HCT116 (cell line): ENCODE measurements at regions of chr12 and their contacts with region 1.

Region 1: DNA sequence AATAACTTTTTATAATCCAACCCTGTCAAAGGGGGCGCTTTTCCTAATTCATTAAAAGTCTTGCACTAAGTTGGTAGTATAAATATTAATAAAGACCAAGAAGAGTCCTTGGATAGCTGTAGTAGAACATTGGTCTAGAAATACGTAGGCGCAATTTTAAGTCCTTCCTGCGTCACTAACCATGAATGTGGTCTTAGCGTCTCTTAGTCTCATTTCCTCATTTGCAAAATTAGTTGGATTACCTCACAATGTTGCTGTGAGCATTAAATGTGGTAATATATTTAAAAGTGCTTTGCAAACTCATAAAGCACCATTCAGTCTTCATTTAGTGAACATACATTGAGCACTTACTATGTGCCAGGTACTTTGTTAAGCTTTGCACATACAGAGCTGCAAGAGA is 149.7 kb downstream of the AEBP2 start:
- DNase-seq: no peak
- ATAC-seq: no peak
- H3K4me3 ChIP-seq: no peak overlapping the region
- H3K27ac ChIP-seq: no peak overlapping the region
- H3K4me1 ChIP-seq: no peaks in the 10 kb centered on the region
- H3K27me3 ChIP-seq: no peaks in the 10 kb centered on the region
- CTCF ChIP-seq: no peak
- POLR2A ChIP-seq: no peak
- RAD21 ChIP-seq: no peak

Region 2: DNA sequence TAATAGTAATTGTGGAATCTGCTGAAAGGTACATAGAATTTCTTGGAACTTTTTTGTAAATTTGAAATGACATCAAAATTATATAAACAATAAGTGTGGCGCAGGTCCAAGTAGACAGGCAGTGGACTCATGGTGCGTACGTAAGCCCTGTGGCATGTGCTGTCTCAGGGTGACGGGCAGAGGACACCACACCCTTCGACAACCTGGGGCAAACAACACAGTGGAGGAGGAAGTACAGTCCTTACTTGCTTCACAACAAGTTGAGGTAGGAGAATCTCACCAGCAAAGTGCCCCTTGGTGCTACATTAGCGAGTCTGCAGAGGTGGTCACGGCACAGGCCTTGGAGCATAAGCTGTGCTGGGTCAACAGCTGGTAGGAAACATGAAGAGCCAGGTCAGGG is 31.3 kb after region 1 on chr12:
- CTCF ChIA-PET with region 1: no interaction called
- POLR2A ChIA-PET with region 1: no interaction called
- RAD21 ChIA-PET with region 1: no interaction called
- intact Hi-C with region 1: loop called (anchors 1 kb)
- DNase-seq: no peak
- ATAC-seq: no peak
- H3K4me3 ChIP-seq: no peak overlapping the region
- H3K27ac ChIP-seq: no peak overlapping the region
- H3K4me1 ChIP-seq: no peaks in the 10 kb centered on the region
- H3K27me3 ChIP-seq: no peaks in the 10 kb centered on the region
- CTCF ChIP-seq: no peak
- POLR2A ChIP-seq: no peak
- RAD21 ChIP-seq: no peak

Region 3: DNA sequence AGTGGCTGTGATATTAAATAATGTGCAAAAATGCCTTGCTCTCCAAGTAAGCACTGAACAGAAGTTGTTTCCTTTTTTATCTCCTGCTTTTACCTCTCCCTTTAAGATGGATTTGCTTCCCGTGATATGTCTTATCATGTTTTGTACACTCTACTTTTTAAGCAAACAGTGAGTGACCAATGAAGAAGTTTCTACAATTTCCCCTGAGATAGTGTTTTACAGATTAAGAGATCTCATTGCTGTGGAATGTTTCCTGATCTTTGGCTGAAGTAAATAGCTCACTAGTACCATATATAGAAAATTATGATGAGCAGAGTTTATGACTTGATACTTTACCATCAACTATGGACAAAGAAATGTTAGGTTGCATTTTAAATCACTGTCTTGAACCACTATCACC is 594.6 kb after region 1 on chr12:
- CTCF ChIA-PET with region 1: no interaction called
- POLR2A ChIA-PET with region 1: no interaction called
- RAD21 ChIA-PET with region 1: no interaction called
- intact Hi-C with region 1: no loop called
- DNase-seq: no peak
- ATAC-seq: no peak
- H3K4me3 ChIP-seq: no peak overlapping the region
- H3K27ac ChIP-seq: no peak overlapping the region
- H3K4me1 ChIP-seq: no peaks in the 10 kb centered on the region
- H3K27me3 ChIP-seq: no peaks in the 10 kb centered on the region
- CTCF ChIP-seq: no peak
- POLR2A ChIP-seq: no peak
- RAD21 ChIP-seq: no peak

Region 4: DNA sequence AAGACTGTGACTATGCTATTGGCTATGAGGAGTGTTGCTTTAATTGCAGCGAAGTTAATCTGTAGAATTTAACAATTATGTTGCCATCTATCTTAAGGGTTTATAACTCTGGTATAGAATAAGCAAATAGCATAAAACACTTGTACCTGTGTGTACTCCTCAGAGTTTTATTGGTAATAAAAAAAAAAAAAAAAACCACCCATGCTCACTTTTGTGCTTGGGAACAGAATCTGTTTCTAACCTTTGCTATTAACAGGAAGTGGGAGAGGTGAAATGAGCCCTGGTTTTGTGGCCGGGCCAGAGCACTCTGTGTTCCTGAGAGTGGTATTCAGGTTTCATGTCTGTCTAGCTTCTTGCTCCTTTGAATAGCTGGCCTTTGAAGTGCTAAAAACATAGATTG is 832.5 kb after region 1 on chr12:
- CTCF ChIA-PET with region 1: no interaction called
- POLR2A ChIA-PET with region 1: no interaction called
- RAD21 ChIA-PET with region 1: no interaction called
- intact Hi-C with region 1: loop called (anchors 5 kb)
- DNase-seq: no peak
- ATAC-seq: no peak
- H3K4me3 ChIP-seq: no peak overlapping the region
- H3K27ac ChIP-seq: no peak overlapping the region
- H3K4me1 ChIP-seq: no peaks in the 10 kb centered on the region
- H3K27me3 ChIP-seq: no peaks in the 10 kb centered on the region
- CTCF ChIP-seq: no peak
- POLR2A ChIP-seq: no peak
- RAD21 ChIP-seq: no peak